Panc1 (cell line): ENCODE measurements at regions of chr19 and their contacts with region 1.

Region 1: DNA sequence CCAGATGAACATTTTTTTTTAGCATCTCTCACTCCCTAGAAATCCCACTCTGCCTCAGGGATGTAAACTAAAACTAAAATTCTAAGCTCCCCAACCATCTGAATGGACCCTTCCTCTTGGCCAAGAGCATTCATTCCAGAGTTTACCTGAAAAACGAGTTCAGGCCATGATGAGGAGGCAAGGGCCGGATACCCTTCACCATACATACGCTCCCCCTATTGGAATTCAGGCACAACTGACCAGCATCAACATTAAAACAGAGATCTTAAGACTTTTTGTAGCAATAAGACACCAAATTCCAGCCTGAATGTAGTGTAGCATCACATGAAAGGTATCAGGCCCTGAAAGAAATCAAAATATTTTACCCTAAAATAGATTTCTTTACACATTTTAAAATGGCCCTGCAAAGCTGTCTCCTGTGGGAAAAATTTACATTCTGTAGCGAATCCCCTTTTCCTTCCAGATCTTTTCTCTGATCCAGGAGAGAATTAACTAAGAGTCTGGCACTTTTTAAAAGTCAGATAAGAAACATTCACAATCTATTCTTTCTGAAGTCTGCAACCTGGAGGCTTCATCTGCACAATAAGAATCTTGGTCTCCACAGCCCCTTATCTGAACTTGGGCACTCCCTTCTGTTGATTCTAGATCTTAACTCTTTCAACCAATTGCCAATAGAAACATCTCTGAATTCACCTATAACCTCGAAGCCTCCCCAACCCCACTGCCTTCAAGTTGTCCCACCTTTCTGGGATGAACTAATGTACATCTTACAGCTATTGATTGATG is 888.5 kb downstream of the UQCRFS1 start:
- DNase-seq: no peak
- ATAC-seq: no peak
- H3K4me3 ChIP-seq: no peak overlapping the region
- H3K27ac ChIP-seq: no peak overlapping the region
- H3K4me1 ChIP-seq: no peaks in the 10 kb centered on the region
- H3K27me3 ChIP-seq: no peaks in the 10 kb centered on the region; the same call in 1 of the 2 replicates
- CTCF ChIP-seq: peak; percentile 36

Region 2: GRCh38 chr19:27966390-27966816 is 358.1 kb before region 1 on chr19:
- CTCF ChIA-PET with region 1: no interaction called
- POLR2A ChIA-PET with region 1: no interaction called
- in situ Hi-C with region 1: no loop called
- intact Hi-C with region 1: loop called (anchors 2 kb)
- DNase-seq: no peak
- ATAC-seq: no peak
- H3K4me3 ChIP-seq: no peak overlapping the region
- H3K27ac ChIP-seq: no peak overlapping the region
- H3K4me1 ChIP-seq: no peaks in the 10 kb centered on the region
- H3K27me3 ChIP-seq: no peaks in the 10 kb centered on the region
- CTCF ChIP-seq: peak; percentile 81; the same call in 1 of the 2 replicates

Region 3: GRCh38 chr19:27974082-27974513 is 350.4 kb before region 1 on chr19:
- CTCF ChIA-PET with region 1: no interaction called
- POLR2A ChIA-PET with region 1: no interaction called
- in situ Hi-C with region 1: no loop called
- intact Hi-C with region 1: loop called (anchors 2 kb)
- DNase-seq: no peak
- ATAC-seq: peak; percentile 80; the same call in 1 of the 2 replicates
- H3K4me3 ChIP-seq: no peak overlapping the region
- H3K27ac ChIP-seq: no peak overlapping the region
- H3K4me1 ChIP-seq: no peaks in the 10 kb centered on the region
- H3K27me3 ChIP-seq: no peaks in the 10 kb centered on the region
- CTCF ChIP-seq: peak; percentile 87

Region 4: DNA sequence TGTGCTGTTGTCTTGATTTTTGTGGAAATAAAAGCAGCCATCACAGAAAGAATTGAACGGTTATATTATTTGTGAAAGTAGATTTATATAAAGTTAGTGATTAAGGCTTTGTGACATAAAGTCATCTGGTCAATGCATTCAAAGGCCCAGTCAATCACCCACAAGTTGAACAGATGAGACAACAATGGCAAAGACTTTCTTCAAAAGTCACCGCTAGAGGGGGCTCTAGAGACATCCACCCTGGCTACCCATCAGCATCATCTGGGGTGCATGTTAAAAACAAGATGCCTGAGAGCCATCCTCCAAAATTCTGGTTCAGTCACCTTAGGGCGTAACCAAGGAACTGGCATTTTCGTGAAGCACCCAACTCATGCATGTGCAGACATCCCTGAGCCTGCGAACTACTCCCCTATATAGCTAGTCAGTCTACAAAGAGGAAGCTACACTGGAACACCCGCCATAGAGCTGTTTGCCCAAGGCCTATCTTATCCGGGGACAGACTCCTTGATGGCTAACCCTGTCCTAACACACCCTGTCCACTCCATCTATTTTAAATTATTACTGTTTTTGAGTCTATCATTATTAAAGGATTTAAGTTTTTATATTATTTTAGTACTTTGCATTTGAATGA is 82.1 kb before region 1 on chr19:
- CTCF ChIA-PET with region 1: no interaction called
- POLR2A ChIA-PET with region 1: no interaction called
- in situ Hi-C with region 1: no loop called
- intact Hi-C with region 1: loop called (anchors 5 kb)
- DNase-seq: no peak
- ATAC-seq: peak; percentile 72; the same call in 1 of the 2 replicates
- H3K4me3 ChIP-seq: no peak overlapping the region
- H3K27ac ChIP-seq: no peak overlapping the region
- H3K4me1 ChIP-seq: no peaks in the 10 kb centered on the region
- H3K27me3 ChIP-seq: no peaks in the 10 kb centered on the region
- CTCF ChIP-seq: peak; percentile 87

Region 5: GRCh38 chr19:28640506-28640905 is 316.0 kb after region 1 on chr19:
- CTCF ChIA-PET with region 1: interaction called, 10 read pairs
- POLR2A ChIA-PET with region 1: no interaction called
- in situ Hi-C with region 1: no loop called
- intact Hi-C with region 1: no loop called
- DNase-seq: no peak
- ATAC-seq: no peak
- H3K4me3 ChIP-seq: no peak overlapping the region
- H3K27ac ChIP-seq: no peak overlapping the region
- H3K4me1 ChIP-seq: no peaks in the 10 kb centered on the region
- H3K27me3 ChIP-seq: no peaks in the 10 kb centered on the region
- CTCF ChIP-seq: no peak

Region 6: DNA sequence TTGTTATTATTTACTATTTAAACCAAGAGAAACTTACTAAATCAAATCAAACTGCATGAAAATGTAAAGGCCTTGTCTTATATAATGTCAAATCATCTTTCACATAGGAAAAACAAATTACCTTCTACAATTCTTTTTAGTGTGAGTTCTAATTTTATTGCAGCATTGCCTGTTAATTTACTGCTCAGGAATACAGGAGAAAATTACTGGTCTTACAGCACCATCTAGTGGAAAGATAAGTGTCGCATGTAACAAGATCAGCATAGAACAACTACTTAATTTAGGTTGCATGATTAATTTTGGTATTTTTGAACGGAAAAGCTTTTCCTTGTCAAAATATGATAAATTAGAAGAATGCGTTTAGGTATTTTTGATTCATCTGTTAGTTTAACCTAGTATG is 385.8 kb after region 1 on chr19:
- CTCF ChIA-PET with region 1: no interaction called
- POLR2A ChIA-PET with region 1: no interaction called
- in situ Hi-C with region 1: no loop called
- intact Hi-C with region 1: loop called (anchors 10 kb)
- DNase-seq: peak; percentile 72
- ATAC-seq: peak; percentile 76; the same call in 1 of the 2 replicates
- H3K4me3 ChIP-seq: no peak overlapping the region
- H3K27ac ChIP-seq: no peak overlapping the region
- H3K4me1 ChIP-seq: no peaks in the 10 kb centered on the region
- H3K27me3 ChIP-seq: no peaks in the 10 kb centered on the region
- CTCF ChIP-seq: peak; percentile 72; the same call in 1 of the 2 replicates